Naive thymus-derived CD8-positive, alpha-beta T cell (primary cell): ENCODE measurements at regions of chr16 and their contacts with region 1.

Region 1: GRCh38 chr16:57013229-57013628 is 23.9 kb downstream of the NLRC5 start:
- DNase-seq: no peak
- ATAC-seq: no peak
- H3K4me3 Mint-ChIP-seq: peak overlapping the region in 9 of 10 donors; percentile 50 to 83 (median 75)
- H3K27ac Mint-ChIP-seq: peak overlapping the region; percentile 87 to 99 (median 95)
- H3K4me1 Mint-ChIP-seq: peaks cover 29 to 87% (median 80%) of the 10 kb centered on the region in 4 donors
- H3K27me3 Mint-ChIP-seq: no peaks in the 10 kb centered on the region

Region 2: DNA sequence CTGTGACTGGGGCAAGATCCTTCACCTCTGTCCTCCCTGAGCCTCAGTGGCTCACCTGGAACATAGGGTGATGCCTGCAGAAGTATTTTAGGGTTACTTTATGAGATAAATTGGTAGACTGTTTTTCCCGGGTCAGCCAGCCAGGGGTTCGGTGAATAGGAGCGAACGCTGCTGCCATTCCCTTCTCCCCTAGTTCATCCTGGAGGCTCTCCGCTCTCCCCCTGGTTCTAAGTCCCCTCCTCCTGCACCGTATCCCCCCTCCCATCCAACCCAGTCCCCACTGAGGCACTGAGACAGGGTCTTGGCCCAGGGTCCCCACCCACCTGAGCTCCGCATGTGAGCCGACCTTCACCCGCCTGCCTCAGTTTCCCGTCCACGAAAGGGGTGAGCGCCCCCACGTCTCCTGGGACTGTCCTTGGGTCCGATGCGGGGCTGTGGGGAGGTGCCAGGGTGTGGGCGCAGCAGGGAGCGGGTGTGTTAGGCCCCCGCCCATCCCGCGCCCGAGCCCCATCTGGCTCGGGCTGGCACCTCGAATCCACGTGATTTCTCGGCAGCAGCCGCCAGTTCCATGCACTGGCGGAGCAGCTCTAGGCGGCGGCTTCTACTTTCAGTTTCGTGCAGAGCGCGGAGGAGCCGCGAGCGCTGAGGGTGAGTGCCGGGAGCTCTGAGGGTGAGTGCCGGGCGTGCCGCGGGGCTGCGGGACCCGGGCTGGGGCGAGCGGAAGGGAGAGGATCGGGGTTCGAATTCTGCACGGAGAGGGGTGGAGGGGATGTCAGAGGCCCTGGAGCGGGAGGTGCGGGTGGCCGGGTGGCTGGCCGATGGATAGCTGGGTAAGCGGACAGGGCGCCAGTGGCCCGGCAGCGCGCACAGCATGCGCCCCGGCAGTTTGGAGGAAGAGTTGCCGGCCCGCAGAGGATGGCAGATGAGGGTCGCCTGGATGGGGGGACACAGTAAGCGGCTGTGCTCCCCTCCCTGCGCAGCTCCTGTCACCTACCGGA is 24.0 kb before region 1 on chr16 and contains the start of gene NLRC5:
- POLR2A ChIA-PET with region 1: interaction called, 54 read pairs
- DNase-seq: peak; percentile 80 to 93 (median 88)
- ATAC-seq: peak; percentile 84 to 90
- H3K4me3 Mint-ChIP-seq: peak within 1 kb of the TSS; percentile 94 to 100 (median 100)
- H3K27ac Mint-ChIP-seq: peak within 1 kb of the TSS; percentile 96 to 99 (median 98)
- H3K4me1 Mint-ChIP-seq: peaks cover 53 to 89% (median 74%) of the 10 kb centered on the region in 4 donors
- H3K27me3 Mint-ChIP-seq: no peaks in the 10 kb centered on the region
- polyA plus RNA-seq, gene NLRC5: 70.4 to 137 (median 80.0) TPM

Region 3: GRCh38 chr16:56994311-56994710 is 18.9 kb before region 1 on chr16:
- POLR2A ChIA-PET with region 1: interaction called, 54 read pairs
- DNase-seq: no peak
- ATAC-seq: peak in 1 of 2 donors; percentile 14
- H3K4me3 Mint-ChIP-seq: peak overlapping the region; percentile 76 to 100 (median 87)
- H3K27ac Mint-ChIP-seq: peak overlapping the region; percentile 86 to 98 (median 96)
- H3K4me1 Mint-ChIP-seq: peaks cover 46 to 88% (median 78%) of the 10 kb centered on the region in 4 donors
- H3K27me3 Mint-ChIP-seq: no peaks in the 10 kb centered on the region

Region 4: DNA sequence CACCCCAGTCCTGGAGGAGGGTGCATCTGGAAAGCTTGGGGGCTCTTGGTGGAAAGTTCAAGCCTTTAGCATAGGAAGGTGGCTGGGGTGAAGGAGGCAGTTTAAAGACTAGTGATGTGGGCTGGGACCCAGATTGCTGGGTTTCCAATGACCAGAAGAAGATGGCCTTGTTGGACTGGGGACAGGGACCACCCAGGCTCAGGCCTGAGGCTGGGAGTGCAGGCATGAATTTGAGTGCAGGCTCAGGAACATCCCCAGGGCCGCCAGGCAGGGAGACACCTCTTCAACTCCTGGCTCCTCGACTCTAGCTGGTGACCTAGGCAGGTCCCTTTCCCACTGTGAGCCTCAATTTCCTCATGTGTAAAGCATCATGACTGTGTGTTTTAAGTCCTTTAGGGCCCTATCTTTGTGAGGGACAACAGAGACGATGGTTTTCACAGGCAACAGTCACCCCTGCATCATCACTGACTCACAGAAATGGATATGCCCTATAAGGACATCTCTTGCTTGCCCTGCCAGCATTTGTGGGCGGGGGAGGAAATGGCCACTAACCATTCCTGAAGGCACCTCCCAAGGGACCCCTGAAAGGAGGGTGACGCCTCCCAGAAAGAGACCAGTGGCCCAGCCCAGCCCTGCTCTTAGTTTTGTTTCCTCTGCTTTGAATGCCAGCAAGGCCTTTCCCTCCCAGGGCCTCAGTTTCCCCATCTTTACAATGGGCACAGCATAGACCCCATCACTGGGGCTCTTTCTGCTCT is 12.8 kb before region 1 on chr16:
- POLR2A ChIA-PET with region 1: interaction called, 16 read pairs
- DNase-seq: no peak
- ATAC-seq: peak; percentile 25 to 26
- H3K4me3 Mint-ChIP-seq: peak overlapping the region; percentile 59 to 100 (median 77)
- H3K27ac Mint-ChIP-seq: peak overlapping the region; percentile 90 to 98 (median 96)
- H3K4me1 Mint-ChIP-seq: peaks cover 47 to 97% (median 95%) of the 10 kb centered on the region in 4 donors
- H3K27me3 Mint-ChIP-seq: no peaks in the 10 kb centered on the region

Region 5: DNA sequence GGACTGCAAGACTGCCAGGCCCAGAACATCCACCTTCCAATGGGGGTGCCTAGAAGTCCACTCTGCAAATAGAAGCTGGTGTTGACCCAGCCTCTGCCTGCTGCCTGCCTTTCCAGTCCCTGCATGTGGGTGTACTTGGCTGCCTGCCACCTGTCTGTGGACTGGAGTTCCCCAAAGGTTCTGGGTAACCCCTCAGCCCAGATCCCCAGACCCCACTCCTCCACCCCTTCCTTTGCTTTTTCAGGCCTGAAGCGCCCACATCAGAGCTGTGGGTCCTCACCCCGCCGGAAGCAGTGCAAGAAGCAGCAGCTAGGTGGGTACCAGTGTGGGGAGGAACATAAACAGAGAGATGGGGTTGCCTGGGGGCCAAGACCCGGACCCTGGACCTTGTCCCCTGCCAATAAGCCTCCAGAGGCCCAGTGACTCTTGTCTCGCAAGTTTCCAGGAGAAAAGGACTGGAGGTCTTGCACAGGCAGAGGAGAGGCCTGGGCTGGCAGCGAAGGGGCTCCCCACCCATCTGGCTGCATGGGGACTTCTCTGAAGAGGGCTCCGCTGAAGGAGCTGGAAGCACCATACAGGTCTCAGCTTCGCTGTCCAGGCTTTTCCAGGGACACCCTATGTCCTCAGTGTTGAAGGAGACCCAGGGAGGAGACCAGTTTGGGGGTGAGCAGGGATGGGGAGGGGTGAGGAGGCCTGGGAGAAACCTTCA is 10.5 kb after region 1 on chr16:
- POLR2A ChIA-PET with region 1: interaction called, 162 read pairs
- DNase-seq: peak; percentile 62 to 92 (median 86)
- ATAC-seq: peak; percentile 92 to 97
- H3K4me3 Mint-ChIP-seq: peak overlapping the region; percentile 55 to 88 (median 78)
- H3K27ac Mint-ChIP-seq: peak overlapping the region; percentile 85 to 97 (median 92)
- H3K4me1 Mint-ChIP-seq: peaks cover 69 to 97% (median 90%) of the 10 kb centered on the region in 4 donors
- H3K27me3 Mint-ChIP-seq: no peaks in the 10 kb centered on the region

Region 6: GRCh38 chr16:57039148-57039812 is 26.1 kb after region 1 on chr16:
- POLR2A ChIA-PET with region 1: interaction called, 12 read pairs
- DNase-seq: peak in 5 of 10 donors; percentile 19 to 67 (median 58)
- ATAC-seq: peak; percentile 47 to 48
- H3K4me3 Mint-ChIP-seq: peak overlapping the region; percentile 64 to 91 (median 80)
- H3K27ac Mint-ChIP-seq: peak overlapping the region; percentile 88 to 100 (median 97)
- H3K4me1 Mint-ChIP-seq: peaks cover 55 to 96% (median 93%) of the 10 kb centered on the region in 4 donors
- H3K27me3 Mint-ChIP-seq: no peaks in the 10 kb centered on the region

Region 7: DNA sequence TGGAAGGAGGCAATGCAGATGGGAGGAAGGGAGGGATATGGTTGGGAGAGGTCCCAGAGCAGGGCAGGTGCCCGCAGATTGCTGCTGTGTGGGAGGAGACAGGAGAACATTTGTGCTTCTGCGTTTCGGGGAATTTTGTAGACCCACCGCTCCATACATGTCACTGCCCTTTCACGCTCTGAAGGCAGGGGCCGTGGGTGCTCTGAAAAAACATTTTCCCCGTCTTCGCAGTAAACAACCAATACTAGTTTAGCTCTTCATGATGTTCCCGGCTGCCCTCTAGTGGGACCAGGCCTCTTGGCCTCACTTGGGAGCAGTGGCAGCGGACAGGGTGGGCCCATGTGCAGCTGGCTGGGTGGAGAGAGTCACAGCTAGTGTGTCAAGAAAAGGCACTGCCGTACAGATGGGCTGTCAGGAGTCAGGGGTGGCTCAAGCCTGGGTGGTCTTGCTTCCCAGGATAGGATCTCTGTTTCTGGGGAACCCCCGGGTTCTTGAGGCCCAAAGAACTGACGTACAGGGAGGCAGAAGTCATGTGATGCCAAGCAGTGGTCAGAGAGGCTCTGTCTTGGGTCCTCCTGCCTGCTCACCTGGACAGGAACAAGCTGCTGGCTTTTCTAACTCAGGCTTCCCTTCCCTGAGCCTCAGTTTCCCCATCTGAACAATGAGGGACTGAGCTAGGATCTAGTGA is 32.6 kb after region 1 on chr16:
- POLR2A ChIA-PET with region 1: interaction called, 12 read pairs
- DNase-seq: peak in 9 of 10 donors; percentile 28 to 82 (median 42)
- ATAC-seq: peak; percentile 9 to 11
- H3K4me3 Mint-ChIP-seq: peak overlapping the region in 9 of 10 donors; percentile 11 to 65 (median 57)
- H3K27ac Mint-ChIP-seq: peak overlapping the region; percentile 79 to 100 (median 92)
- H3K4me1 Mint-ChIP-seq: peaks cover 26 to 65% (median 58%) of the 10 kb centered on the region in 4 donors
- H3K27me3 Mint-ChIP-seq: no peaks in the 10 kb centered on the region

Region 8: GRCh38 chr16:57128771-57129389 is 115.7 kb after region 1 on chr16:
- POLR2A ChIA-PET with region 1: no interaction called
- DNase-seq: peak; percentile 36 to 87 (median 69)
- ATAC-seq: peak; percentile 76 to 87
- H3K4me3 Mint-ChIP-seq: peak overlapping the region; percentile 79 to 94 (median 88)
- H3K27ac Mint-ChIP-seq: peak overlapping the region; percentile 89 to 99 (median 97)
- H3K4me1 Mint-ChIP-seq: peaks cover 67 to 99% (median 90%) of the 10 kb centered on the region in 4 donors
- H3K27me3 Mint-ChIP-seq: no peaks in the 10 kb centered on the region